ENCODE measurements at regions of chr12 and their contacts with region 1.

Region 1: DNA sequence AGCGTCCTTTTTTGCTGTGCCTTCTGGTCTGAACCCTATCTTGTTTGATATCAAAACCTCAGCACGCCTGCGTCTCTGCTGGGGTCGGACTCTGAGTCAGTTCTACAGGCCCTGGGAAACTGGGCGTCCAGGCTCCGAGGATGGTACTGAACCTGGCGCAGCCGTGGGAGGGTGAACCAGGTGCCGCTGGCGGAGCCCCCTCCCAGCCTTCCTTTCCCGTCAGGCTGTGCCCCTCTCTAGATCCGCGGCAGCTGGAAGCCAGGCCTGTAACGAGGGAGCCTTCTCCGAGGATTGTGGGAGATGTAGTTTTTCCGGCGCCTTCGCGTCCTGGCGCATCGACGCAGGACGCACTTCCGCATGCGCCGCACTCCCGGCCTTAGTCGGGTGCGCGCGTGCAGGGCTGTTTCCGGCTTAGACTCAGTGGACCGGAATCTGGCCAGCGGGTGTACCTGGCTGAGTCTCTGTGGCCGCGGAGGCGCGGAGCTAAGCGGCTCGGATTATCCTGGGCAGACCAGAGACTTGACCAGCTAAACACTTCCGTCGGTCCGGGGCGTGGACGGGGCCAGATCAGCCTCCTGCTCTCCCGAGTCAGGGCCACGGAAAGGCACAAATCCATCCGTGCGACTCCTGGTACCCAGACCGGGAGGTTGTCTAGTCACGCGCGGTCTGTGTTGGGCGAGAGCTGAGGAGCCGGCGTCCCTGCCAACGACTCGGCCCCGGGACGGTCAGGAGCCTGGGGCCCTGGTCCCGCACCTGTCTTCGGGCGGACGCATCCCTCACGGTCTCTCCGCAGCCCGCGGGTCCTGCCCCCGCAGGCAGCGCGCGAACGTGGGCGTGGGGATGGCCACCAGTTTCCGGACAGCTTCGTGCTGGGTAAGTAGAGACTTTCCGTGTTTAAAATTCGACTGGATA is at the start of gene ZNF26:
- DNase-seq: peak; percentile 80
- ATAC-seq: peak; percentile 93
- H3K4me3 Mint-ChIP-seq: peak within 1 kb of the TSS; percentile 95
- H3K27ac Mint-ChIP-seq: peak within 1 kb of the TSS; percentile 94
- H3K4me1 Mint-ChIP-seq: peaks cover 23% of the 10 kb centered on the region
- H3K27me3 Mint-ChIP-seq: no peaks in the 10 kb centered on the region
- CTCF ChIP-seq: no peak
- total RNA-seq, gene ZNF26: 20.8 and 24.9 TPM in 2 replicates

Region 2: DNA sequence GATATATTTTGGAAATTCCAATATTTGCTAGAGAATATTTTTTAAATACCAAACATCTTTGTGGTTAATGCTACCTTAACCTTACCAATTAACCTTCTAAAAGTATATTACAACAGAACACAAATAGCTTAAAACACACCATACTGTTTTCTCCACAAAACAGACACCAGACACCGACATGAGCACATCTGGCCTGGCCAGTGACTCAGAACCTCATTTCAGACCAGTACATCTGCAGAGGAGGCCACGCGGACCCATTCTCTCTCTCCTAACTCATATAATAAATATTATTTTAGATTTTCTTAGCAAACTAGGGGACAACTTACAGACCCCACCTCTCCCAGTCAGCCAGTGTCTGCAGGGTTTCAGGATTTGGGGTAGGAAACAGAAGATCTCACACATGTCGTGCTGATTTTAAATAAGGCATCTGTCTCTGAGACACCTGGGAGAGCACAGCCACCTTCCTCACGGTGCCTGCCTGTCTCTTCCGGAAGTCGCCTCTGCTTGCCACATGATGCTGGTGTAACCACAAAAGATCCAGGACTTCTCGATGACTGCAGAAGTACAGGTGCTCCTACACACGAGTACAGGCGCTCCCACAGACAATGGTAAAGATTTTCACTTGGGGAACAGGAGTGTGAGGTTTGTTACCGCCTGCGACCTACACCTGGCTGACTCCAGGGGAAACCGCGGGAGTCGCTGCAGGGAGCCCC is 215.0 kb before region 1 on chr12:
- CTCF ChIA-PET with region 1: no interaction called
- POLR2A ChIA-PET with region 1: no interaction called
- intact Hi-C with region 1: loop called (anchors 2 kb)
- DNase-seq: peak; percentile 38
- ATAC-seq: peak; percentile 49
- H3K4me3 Mint-ChIP-seq: peak overlapping the region; percentile 62
- H3K27ac Mint-ChIP-seq: peak overlapping the region; percentile 94
- H3K4me1 Mint-ChIP-seq: peaks cover 68% of the 10 kb centered on the region
- H3K27me3 Mint-ChIP-seq: no peaks in the 10 kb centered on the region
- CTCF ChIP-seq: no peak

Region 3: GRCh38 chr12:132887513-132888351 is 98.5 kb before region 1 on chr12 and contains the start of gene CHFR:
- CTCF ChIA-PET with region 1: no interaction called
- POLR2A ChIA-PET with region 1: interaction called, 16 read pairs
- intact Hi-C with region 1: loop called (anchors 1 kb)
- DNase-seq: peak; percentile 90
- ATAC-seq: peak; percentile 98
- H3K4me3 Mint-ChIP-seq: peak within 1 kb of the TSS; percentile 98
- H3K27ac Mint-ChIP-seq: peak within 1 kb of the TSS; percentile 100
- H3K4me1 Mint-ChIP-seq: peaks cover 24% of the 10 kb centered on the region
- H3K27me3 Mint-ChIP-seq: peaks cover 7% of the 10 kb centered on the region
- CTCF ChIP-seq: no peak
- total RNA-seq, gene CHFR: 89.4 and 108 TPM in 2 replicates

Region 4: GRCh38 chr12:132956011-132956788 is 30.1 kb before region 1 on chr12 and contains the start of gene ZNF605:
- CTCF ChIA-PET with region 1: no interaction called
- POLR2A ChIA-PET with region 1: interaction called, 20 read pairs
- intact Hi-C with region 1: loop called (anchors 1 kb)
- DNase-seq: peak; percentile 87
- ATAC-seq: peak; percentile 89
- H3K4me3 Mint-ChIP-seq: peak within 1 kb of the TSS; percentile 96
- H3K27ac Mint-ChIP-seq: peak within 1 kb of the TSS; percentile 93
- H3K4me1 Mint-ChIP-seq: peaks cover 33% of the 10 kb centered on the region
- H3K27me3 Mint-ChIP-seq: no peaks in the 10 kb centered on the region
- CTCF ChIP-seq: no peak
- total RNA-seq, gene ZNF605: 12.2 and 15.4 TPM in 2 replicates

Region 5: DNA sequence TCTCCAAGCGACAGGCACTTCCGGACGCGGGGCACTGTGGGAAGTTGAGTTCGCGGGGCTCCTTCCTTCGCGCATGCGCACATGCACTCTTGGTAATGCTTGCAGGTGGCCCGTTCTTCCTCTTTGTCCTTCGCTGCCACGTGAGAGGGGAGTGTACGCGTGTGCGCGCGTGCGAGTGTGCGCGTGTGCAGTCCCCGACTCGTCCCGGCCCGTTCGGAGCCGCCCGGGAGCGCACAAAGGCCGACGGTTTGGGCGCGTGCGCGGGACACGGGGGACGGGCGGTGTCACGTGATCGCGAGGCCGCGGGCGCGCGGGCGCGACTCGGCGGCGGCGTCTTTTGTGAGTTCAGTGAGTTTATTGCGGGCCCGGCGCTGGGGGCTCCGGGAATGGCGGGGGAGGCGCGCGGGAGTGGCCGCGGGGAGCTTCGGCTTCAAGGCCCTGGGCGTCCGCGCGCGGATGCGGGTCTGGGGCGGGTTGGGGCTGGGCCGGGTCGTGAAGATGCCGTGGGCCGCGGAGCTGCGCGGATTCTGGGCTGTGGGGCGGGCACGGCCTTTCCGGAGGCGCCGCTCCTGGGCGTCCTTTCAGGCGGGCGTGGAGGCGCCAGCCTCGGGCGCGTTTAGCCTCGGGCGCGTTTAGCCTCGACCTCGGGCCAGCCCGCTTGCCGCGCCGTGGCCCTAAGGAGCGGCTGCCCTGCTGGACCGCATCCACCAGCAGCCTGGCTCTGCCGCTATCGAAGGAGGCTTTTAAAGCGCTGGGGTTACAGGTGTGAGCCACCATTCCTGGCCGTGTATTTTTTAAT is 51.1 kb after region 1 on chr12 and contains the start of gene ZNF84:
- CTCF ChIA-PET with region 1: no interaction called
- POLR2A ChIA-PET with region 1: interaction called, 9 read pairs
- intact Hi-C with region 1: loop called (anchors 1 kb)
- DNase-seq: peak; percentile 92
- ATAC-seq: peak; percentile 95
- H3K4me3 Mint-ChIP-seq: peak within 1 kb of the TSS; percentile 91
- H3K27ac Mint-ChIP-seq: peak within 1 kb of the TSS; percentile 96
- H3K4me1 Mint-ChIP-seq: peaks cover 20% of the 10 kb centered on the region
- H3K27me3 Mint-ChIP-seq: peaks cover 2% of the 10 kb centered on the region
- CTCF ChIP-seq: no peak
- total RNA-seq, gene ZNF84: 34.8 and 41.1 TPM in 2 replicates

Region 6: GRCh38 chr12:133181238-133181959 is 195.1 kb after region 1 on chr12 and contains the start of gene ZNF268:
- CTCF ChIA-PET with region 1: interaction called, 10 read pairs
- POLR2A ChIA-PET with region 1: interaction called, 27 read pairs
- intact Hi-C with region 1: loop called (anchors 1 kb)
- DNase-seq: peak; percentile 86
- ATAC-seq: peak; percentile 97
- H3K4me3 Mint-ChIP-seq: peak within 1 kb of the TSS; percentile 94
- H3K27ac Mint-ChIP-seq: peak within 1 kb of the TSS; percentile 89
- H3K4me1 Mint-ChIP-seq: peaks cover 20% of the 10 kb centered on the region
- H3K27me3 Mint-ChIP-seq: no peaks in the 10 kb centered on the region
- CTCF ChIP-seq: no peak
- total RNA-seq, gene ZNF268: 29.1 and 29.3 TPM in 2 replicates

Measured in activated B cell treated with CpG ODN at 0.5 μM for 24 hours (primary cell).